Left ventricle myocardium inferior (tissue), 1 donor: ENCODE measurements at regions of chr1 and their contacts with region 1.

Region 1: GRCh38 chr1:77533660-77534305 is 148.7 kb downstream of the ZZZ3 start:
- DNase-seq: no peak
- H3K4me3 ChIP-seq: no peak overlapping the region
- H3K27ac ChIP-seq: no peak overlapping the region
- H3K4me1 ChIP-seq: no peaks in the 10 kb centered on the region
- H3K27me3 ChIP-seq: no peaks in the 10 kb centered on the region
- CTCF ChIP-seq: peak; percentile 87

Region 2: DNA sequence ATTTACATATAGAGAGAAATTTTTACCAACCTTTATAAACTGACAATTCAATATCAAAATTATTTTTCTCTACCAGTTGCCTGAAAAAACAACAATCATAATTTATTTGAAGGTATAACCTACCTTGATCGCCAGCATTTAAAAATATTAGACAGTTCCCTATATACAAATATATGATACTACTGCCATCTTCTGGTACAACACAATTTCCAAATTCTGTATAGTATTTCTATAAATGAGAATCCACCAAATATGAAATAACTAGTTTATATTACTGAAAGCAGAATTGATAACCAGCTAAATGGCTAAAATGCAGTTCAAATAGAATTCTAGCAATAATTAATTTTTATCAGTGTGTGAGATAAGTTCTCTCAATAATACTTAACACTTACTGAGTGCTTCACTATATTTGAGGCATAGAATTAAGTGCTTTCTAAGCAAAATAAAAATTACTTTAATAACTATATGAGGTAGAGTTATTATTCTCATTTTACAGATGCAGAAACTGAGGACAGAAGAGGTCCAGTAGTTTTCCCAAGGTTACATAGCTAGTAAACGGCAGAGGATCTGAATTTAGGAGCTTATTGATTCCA is 390.2 kb before region 1 on chr1:
- intact Hi-C with region 1: loop called (anchors 10 kb)
- DNase-seq: no peak
- H3K4me3 ChIP-seq: no peak overlapping the region
- H3K27ac ChIP-seq: no peak overlapping the region
- H3K4me1 ChIP-seq: no peaks in the 10 kb centered on the region
- H3K27me3 ChIP-seq: no peaks in the 10 kb centered on the region
- CTCF ChIP-seq: peak; percentile 47

Region 3: DNA sequence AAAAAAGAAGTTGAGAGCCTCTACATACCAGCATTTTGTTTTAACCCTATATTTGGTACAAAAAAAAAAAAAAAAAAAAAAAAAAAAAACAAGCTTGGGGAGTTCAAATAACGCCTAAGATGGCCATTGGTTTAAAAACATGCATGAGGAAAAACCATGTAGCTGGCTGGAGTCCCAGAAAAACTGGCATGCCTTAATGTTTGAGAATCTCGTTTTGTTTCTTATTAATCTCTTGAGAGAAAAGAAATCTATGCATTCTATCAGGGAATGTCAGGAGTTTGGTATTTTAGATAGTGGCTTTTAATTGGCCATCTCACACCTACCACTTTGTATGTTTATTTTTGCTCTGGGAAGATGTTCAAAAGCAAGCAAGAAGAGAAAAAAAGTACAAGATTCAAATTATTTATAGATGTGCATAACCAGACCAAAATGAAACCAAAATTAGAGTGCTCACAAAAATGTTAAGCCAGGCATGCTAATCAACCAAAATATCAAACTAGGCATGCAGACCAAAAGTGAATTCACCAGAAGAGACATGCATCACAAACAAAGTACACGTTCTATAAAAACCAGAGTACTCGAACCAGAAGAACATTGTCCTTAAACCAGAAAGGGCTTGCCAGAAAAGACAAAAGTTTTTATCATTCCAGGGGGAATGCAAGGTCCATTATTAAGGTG is 95.4 kb before region 1 on chr1:
- intact Hi-C with region 1: no loop called
- DNase-seq: no peak
- H3K4me3 ChIP-seq: no peak overlapping the region
- H3K27ac ChIP-seq: no peak overlapping the region
- H3K4me1 ChIP-seq: no peaks in the 10 kb centered on the region
- H3K27me3 ChIP-seq: no peaks in the 10 kb centered on the region
- CTCF ChIP-seq: no peak

Region 4: DNA sequence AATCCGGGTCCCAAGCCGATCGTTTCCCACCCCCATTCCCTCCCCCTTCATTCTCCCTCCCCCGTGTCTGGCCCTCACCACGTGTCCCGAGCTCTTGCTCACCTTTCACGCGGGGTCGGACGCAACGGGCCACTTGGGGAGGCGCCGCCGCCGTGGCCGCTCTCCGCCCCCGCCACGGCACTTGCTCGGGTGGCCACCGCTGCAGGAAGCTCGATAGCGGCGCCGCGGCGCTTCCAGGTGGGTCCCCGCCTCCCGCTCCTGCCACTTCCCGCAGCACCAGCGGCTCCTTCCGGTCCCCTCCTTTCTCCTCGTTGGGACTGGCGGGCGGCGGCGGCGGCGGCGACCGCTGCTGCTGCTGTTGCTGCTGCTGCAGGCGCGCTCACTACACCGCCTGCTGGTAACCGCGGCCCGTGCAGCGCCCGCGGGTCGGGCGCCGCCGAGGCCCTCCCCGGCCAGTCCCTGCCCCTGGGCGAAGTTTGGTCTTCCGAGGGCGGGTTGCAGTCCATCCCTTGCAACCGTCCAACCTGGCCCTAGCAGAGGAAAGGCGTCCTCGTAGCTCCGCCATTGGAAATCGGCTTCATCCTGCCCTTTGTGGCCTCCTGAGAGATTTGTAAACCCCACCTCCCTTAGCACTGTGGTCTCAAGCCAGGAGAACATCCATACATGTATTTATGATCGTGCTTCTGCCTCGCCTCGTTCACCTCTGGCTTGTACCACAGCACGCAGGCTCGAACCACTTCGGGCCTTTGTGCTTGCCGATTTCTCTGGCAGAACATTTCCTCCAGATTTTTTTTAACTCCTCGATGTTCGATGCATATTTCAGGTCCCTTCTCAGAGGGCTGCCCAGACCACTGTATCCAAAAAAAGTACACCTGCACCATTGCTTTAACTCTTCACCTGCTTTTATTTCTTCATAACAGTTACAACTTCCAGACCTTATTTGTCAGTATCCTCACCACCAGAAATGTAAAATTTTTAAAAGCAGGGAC is 149.7 kb after region 1 on chr1:
- intact Hi-C with region 1: loop called (anchors 10 kb)
- DNase-seq: peak; percentile 93
- H3K4me3 ChIP-seq: peak overlapping the region; percentile 82
- H3K27ac ChIP-seq: peak overlapping the region; percentile 95
- H3K4me1 ChIP-seq: peaks cover 61% of the 10 kb centered on the region
- H3K27me3 ChIP-seq: no peaks in the 10 kb centered on the region
- CTCF ChIP-seq: peak; percentile 97